AG04449 (cell line): ENCODE measurements at regions of chr4 and their contacts with region 1.

Region 1: GRCh38 chr4:153486281-153487151 is 20.4 kb downstream of the TMEM131L start:
- DNase-seq: peak; percentile 69
- H3K4me3 ChIP-seq: no peak overlapping the region
- CTCF ChIP-seq: no peak

Region 2: GRCh38 chr4:153497988-153498967 is 11.8 kb after region 1 on chr4:
- CTCF ChIA-PET with region 1: interaction called, 8 read pairs
- POLR2A ChIA-PET with region 1: interaction called, 10 read pairs
- DNase-seq: peak; percentile 53
- H3K4me3 ChIP-seq: peak overlapping the region; percentile 12; the same call in 1 of the 2 replicates
- CTCF ChIP-seq: no peak